Tibial artery (tissue), 4 donors: ENCODE measurements at regions of chr5 and their contacts with region 1.

Region 1: GRCh38 chr5:72108202-72109061 is 1.2 kb downstream of the MAP1B start:
- DNase-seq: peak; percentile 86 to 96
- H3K4me3 ChIP-seq: peak overlapping the region; percentile 91 to 96
- H3K27ac ChIP-seq: peak overlapping the region; percentile 96 to 99
- H3K4me1 ChIP-seq: peaks cover 0 to 55% (median 21%) of the 10 kb centered on the region in 4 donors
- H3K27me3 ChIP-seq: no peaks in the 10 kb centered on the region
- CTCF ChIP-seq: no peak

Region 2: GRCh38 chr5:72441861-72442540 is 333.6 kb after region 1 on chr5:
- intact Hi-C with region 1: loop called (anchors 5 kb)
- DNase-seq: no peak
- H3K4me3 ChIP-seq: no peak overlapping the region
- H3K27ac ChIP-seq: peak overlapping the region; percentile 88 to 91
- H3K4me1 ChIP-seq: peaks cover 0 to 81% (median 46%) of the 10 kb centered on the region in 4 donors
- H3K27me3 ChIP-seq: no peaks in the 10 kb centered on the region
- CTCF ChIP-seq: no peak